Mammary epithelial cell (primary cell): ENCODE measurements at regions of chr9 and their contacts with region 1.

Region 1: DNA sequence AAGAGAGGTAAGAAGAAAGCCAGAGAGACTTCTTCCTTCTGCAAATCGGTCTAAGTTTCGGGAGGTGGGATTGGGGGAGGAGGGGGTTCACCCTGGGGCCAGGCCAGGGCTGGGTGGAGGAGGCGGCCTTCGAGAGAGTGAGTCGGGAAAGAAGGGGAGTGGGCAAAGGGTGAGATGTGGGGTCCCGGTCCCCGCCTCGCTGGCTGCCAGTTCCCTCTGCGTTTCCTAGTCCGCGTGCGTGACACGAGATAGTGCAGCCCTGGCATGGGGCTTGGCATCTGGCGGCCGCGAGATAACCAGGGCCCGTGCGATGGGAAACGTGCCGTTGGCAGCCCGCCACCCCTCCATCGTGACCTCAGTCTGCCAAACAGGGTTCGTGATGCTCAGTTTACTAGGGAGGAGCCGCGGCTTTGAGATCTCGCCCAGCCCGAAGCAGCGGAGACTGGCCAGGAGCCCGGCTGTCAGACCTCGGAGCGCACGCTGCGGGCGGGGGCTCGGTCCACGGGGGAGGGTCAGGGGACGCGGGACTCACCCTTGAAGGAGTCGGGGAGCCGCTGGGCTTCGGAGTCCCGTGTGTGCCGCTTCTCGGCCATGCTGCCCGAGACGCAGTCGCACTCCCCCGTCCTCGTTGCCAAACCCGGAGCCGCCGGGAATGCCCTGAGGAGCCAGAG is at the start of gene STOM:
- DNase-seq: peak; percentile 76
- H3K4me3 ChIP-seq: peak within 1 kb of the TSS; percentile 38 to 73 (median 62)
- H3K27ac ChIP-seq: peak within 1 kb of the TSS; percentile 35
- H3K4me1 ChIP-seq: peaks cover 33% of the 10 kb centered on the region
- H3K27me3 ChIP-seq: no peaks in the 10 kb centered on the region
- CTCF ChIP-seq: no peak
- total RNA-seq, gene STOM: 80.3 to 124 TPM

Region 2: GRCh38 chr9:120583958-120584369 is 785.8 kb before region 1 on chr9:
- CTCF ChIA-PET with region 1: no interaction called
- dilution Hi-C with region 1: no loop called
- in situ Hi-C with region 1: no loop called
- intact Hi-C with region 1: no loop called
- DNase-seq: peak; percentile 98
- H3K4me3 ChIP-seq: no peak overlapping the region
- H3K27ac ChIP-seq: peak overlapping the region; percentile 81
- H3K4me1 ChIP-seq: peaks cover 12% of the 10 kb centered on the region
- H3K27me3 ChIP-seq: no peaks in the 10 kb centered on the region
- CTCF ChIP-seq: no peak

Region 3: GRCh38 chr9:121350993-121351561 is 18.7 kb before region 1 on chr9:
- CTCF ChIA-PET with region 1: no interaction called
- dilution Hi-C with region 1: no loop called
- in situ Hi-C with region 1: no loop called
- intact Hi-C with region 1: loop called (anchors 2 kb)
- DNase-seq: peak; percentile 84
- H3K4me3 ChIP-seq: no peak overlapping the region
- H3K27ac ChIP-seq: peak overlapping the region; percentile 9
- H3K4me1 ChIP-seq: peaks cover 16% of the 10 kb centered on the region
- H3K27me3 ChIP-seq: no peaks in the 10 kb centered on the region
- CTCF ChIP-seq: no peak

Region 4: DNA sequence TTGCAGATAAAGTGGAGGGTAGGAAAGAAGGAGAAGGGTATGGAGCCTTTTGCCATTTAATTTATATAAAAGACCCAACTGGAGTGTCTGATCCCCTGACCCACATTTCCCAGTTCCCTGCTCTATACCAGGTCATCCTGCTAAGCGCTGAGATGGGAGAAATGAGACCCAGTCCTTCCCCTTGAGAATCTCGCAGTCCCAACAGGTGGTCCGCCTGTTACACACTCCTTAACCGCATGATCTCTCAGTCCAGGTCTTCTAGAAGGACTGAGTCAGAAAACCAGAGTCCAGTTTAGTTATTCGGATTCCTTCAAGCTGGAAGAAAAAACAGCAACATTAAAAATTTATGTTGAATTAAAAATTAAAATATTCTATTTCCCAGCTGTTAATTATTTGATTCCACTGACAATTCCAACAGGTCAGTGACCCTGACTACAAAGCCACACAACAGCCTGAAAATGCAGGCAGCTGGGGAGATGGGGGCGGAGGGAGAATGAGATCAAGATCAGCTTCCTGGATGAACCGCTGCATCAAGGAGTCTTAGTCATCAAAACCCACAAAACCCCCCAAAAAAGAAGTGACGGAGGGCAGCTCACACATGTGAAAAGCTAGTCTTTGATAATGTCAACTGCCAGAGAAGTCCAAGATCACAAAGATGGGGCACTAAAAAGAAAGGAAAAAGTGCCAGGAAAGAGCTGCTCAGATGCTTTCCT is 86.0 kb after region 1 on chr9:
- CTCF ChIA-PET with region 1: no interaction called
- dilution Hi-C with region 1: no loop called
- in situ Hi-C with region 1: no loop called
- intact Hi-C with region 1: no loop called
- DNase-seq: no peak
- H3K4me3 ChIP-seq: no peak overlapping the region
- H3K27ac ChIP-seq: no peak overlapping the region
- H3K4me1 ChIP-seq: no peaks in the 10 kb centered on the region
- H3K27me3 ChIP-seq: peaks cover 20% of the 10 kb centered on the region
- CTCF ChIP-seq: no peak